T-cell (primary cell): ENCODE measurements at regions of chr2 and their contacts with region 1.

Region 1: DNA sequence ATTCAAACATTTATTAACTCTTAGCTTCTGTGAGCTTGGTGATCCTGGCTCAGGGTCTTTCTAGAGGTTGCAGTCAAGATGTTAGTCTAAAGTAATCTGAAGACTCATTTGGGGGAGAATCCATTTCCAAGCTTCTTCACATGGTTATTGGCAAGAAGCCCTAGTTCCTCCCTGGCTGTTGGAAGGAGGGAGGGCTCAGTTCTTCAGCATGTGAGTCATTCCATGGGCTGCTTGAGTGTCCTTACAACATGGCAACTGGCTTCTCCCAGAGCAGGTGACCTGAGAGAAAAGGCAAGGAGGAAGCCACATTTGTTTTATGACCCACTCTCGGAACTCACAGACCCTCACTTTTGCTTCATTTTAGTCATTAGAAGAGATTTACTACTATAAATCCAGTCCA is 10.6 kb upstream of the C2orf74 start:
- DNase-seq: no peak
- ATAC-seq: no peak
- H3K4me3 ChIP-seq: no peak overlapping the region
- H3K4me3 Mint-ChIP-seq: no peak overlapping the region
- H3K27ac ChIP-seq: no peak overlapping the region
- H3K27ac Mint-ChIP-seq: no peak overlapping the region
- H3K4me1 ChIP-seq: no peaks in the 10 kb centered on the region
- H3K4me1 Mint-ChIP-seq: peaks cover 2 to 6% (median 5%) of the 10 kb centered on the region in 3 donors
- H3K27me3 ChIP-seq: no peaks in the 10 kb centered on the region
- H3K27me3 Mint-ChIP-seq: no peaks in the 10 kb centered on the region

Region 2: GRCh38 chr2:60899230-60899891 is 252.1 kb before region 1 on chr2:
- CTCF ChIA-PET with region 1: no interaction called
- POLR2A ChIA-PET with region 1: interaction called in 1 of 2 experiments, 10 read pairs
- DNase-seq: peak in 1 of 35 experiments; percentile 27
- ATAC-seq: peak in 1 of 4 experiments; percentile 23
- H3K4me3 ChIP-seq: no peak overlapping the region
- H3K4me3 Mint-ChIP-seq: no peak overlapping the region
- H3K27ac ChIP-seq: no peak overlapping the region
- H3K27ac Mint-ChIP-seq: peak overlapping the region; percentile 36 to 41
- H3K4me1 ChIP-seq: peaks cover 0 to 4% of the 10 kb centered on the region in 2 experiments
- H3K4me1 Mint-ChIP-seq: peaks cover 16 to 22% (median 21%) of the 10 kb centered on the region in 3 donors
- H3K27me3 ChIP-seq: no peaks in the 10 kb centered on the region
- H3K27me3 Mint-ChIP-seq: no peaks in the 10 kb centered on the region

Region 3: GRCh38 chr2:61343141-61343540 is 191.7 kb after region 1 on chr2:
- CTCF ChIA-PET with region 1: no interaction called
- POLR2A ChIA-PET with region 1: no interaction called
- DNase-seq: no peak
- ATAC-seq: no peak
- H3K4me3 ChIP-seq: no peak overlapping the region
- H3K4me3 Mint-ChIP-seq: no peak overlapping the region
- H3K27ac ChIP-seq: no peak overlapping the region
- H3K27ac Mint-ChIP-seq: no peak overlapping the region
- H3K4me1 ChIP-seq: no peaks in the 10 kb centered on the region
- H3K4me1 Mint-ChIP-seq: no peaks in the 10 kb centered on the region
- H3K27me3 ChIP-seq: no peaks in the 10 kb centered on the region
- H3K27me3 Mint-ChIP-seq: no peaks in the 10 kb centered on the region

Region 4: GRCh38 chr2:61504949-61505348 is 353.5 kb after region 1 on chr2:
- CTCF ChIA-PET with region 1: no interaction called
- POLR2A ChIA-PET with region 1: no interaction called
- DNase-seq: no peak
- ATAC-seq: no peak
- H3K4me3 ChIP-seq: no peak overlapping the region
- H3K4me3 Mint-ChIP-seq: no peak overlapping the region
- H3K27ac ChIP-seq: no peak overlapping the region
- H3K27ac Mint-ChIP-seq: no peak overlapping the region
- H3K4me1 ChIP-seq: no peaks in the 10 kb centered on the region
- H3K4me1 Mint-ChIP-seq: peaks cover 19 to 28% (median 23%) of the 10 kb centered on the region in 3 donors
- H3K27me3 ChIP-seq: no peaks in the 10 kb centered on the region
- H3K27me3 Mint-ChIP-seq: no peaks in the 10 kb centered on the region